ENCODE measurements at regions of chr20 and their contacts with region 1.

Region 1: DNA sequence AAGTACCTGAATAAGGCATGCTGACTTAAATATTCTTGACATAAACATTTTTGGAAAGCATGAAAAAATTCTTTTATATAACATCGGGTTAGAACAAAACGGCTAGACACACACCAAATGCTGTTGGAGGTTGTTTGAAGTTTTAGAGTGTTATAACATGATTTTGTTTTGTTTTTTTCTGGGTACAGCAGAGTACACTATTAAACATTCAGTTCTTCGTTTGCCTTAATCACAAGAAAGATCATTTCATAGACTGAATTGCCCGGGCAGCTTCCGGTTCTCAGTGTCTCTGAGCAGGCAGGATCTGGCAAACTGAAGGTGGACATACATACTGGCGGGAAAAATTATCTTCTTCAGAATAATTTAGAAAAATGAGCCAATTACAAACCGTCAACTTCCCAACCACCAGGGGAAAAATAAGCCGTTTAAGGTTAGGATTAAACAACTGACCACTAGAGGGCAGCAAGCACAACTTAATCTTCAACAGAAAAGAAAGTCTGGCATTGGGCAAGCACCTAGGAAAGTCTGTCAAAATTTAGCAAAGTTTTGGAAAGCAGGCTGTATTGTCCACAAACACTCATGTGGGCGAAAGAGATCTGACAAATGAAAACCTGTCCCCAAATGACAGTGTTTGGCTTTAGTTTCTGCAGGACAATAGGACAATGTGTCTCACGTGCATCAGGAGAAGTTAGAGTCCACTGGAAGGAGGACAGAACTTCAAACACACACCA is 15.0 kb downstream of the ZNF217 start:
- DNase-seq: peak; percentile 92 to 96 (median 93)
- H3K4me3 ChIP-seq: peak overlapping the region in 5 of 7 experiments; percentile 4 to 65 (median 41)
- H3K27ac ChIP-seq: peak overlapping the region; percentile 52 to 72
- H3K4me1 ChIP-seq: peaks cover 28 to 47% (median 41%) of the 10 kb centered on the region in 4 experiments
- H3K27me3 ChIP-seq: no peaks in the 10 kb centered on the region

Region 2: GRCh38 chr20:53939572-53940359 is 361.1 kb after region 1 on chr20:
- CTCF ChIA-PET with region 1: interaction called, 127 read pairs
- POLR2A ChIA-PET with region 1: no interaction called
- DNase-seq: peak; percentile 94 to 95 (median 95)
- H3K4me3 ChIP-seq: peak overlapping the region in 2 of 7 experiments; percentile 7 to 11
- H3K27ac ChIP-seq: peak overlapping the region; percentile 9 to 31
- H3K4me1 ChIP-seq: peaks cover 23 to 89% (median 62%) of the 10 kb centered on the region in 4 experiments
- H3K27me3 ChIP-seq: no peaks in the 10 kb centered on the region